Transverse colon (tissue), 4 donors: ENCODE measurements at regions of chr9 and their contacts with region 1.

Region 1: DNA sequence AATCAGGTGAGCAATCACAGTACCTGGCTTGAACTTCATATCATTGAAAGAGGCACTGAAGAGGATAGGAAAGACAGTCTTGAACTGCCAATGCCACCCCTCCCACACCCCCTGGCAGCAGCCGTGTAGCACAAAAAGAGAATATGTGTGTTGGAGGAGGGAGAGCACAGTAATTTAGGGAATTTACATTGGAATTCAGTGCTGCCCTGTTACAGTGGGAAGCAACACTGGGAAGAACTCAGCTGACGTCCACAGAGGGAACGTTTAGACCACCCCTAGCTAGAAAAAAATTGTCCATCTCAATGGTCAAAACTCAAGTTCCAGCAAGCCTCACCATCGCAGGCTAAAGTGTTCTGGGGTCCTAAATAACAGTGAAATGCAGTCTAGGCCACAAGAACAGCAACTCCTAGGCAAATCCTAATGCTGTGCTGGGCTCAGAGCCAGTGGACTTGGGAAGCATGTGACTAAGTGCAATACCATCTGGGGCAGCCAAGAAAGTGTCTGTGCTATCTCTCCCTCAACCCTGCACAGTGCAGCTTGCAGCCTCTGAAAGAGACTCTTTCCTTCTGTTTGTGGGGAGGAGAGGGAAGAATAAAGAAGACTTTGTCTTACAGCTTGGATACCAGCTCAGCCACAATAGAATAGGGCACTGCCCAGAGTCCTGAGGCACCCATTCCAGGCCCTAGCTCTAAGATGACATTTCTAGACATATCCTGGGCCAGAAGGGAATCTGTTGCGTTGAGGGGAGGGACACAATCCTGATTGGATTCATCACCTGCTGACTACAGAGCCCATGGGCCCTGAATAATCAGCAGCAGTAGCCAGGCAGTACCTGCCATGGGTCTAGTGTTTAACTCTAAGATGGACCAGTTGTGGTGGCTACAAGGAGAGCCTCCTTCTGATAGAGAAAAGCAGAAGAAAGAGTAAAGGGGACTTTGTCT is 62.1 kb upstream of the VLDLR start:
- DNase-seq: peak; percentile 43
- H3K4me3 ChIP-seq: no peak overlapping the region
- H3K27ac ChIP-seq: peak overlapping the region in 3 of 4 donors; percentile 42 to 57 (median 50)
- H3K4me1 ChIP-seq: peaks cover 8 to 15% (median 11%) of the 10 kb centered on the region in 4 donors
- H3K27me3 ChIP-seq: no peaks in the 10 kb centered on the region
- CTCF ChIP-seq: no peak
- EP300 ChIP-seq: no peak
- POLR2A ChIP-seq: no peak

Region 2: GRCh38 chr9:2502760-2503159 is 56.7 kb before region 1 on chr9:
- in situ Hi-C with region 1: loop called in 1 of 4 experiments (anchors 10 kb)
- intact Hi-C with region 1: no loop called
- DNase-seq: no peak
- H3K4me3 ChIP-seq: no peak overlapping the region
- H3K27ac ChIP-seq: no peak overlapping the region
- H3K4me1 ChIP-seq: no peaks in the 10 kb centered on the region
- H3K27me3 ChIP-seq: no peaks in the 10 kb centered on the region
- CTCF ChIP-seq: no peak
- EP300 ChIP-seq: no peak
- POLR2A ChIP-seq: no peak

Region 3: GRCh38 chr9:2583308-2584013 is 24.0 kb after region 1 on chr9:
- in situ Hi-C with region 1: no loop called
- intact Hi-C with region 1: no loop called
- DNase-seq: peak; percentile 32
- H3K4me3 ChIP-seq: no peak overlapping the region
- H3K27ac ChIP-seq: no peak overlapping the region
- H3K4me1 ChIP-seq: no peaks in the 10 kb centered on the region
- H3K27me3 ChIP-seq: no peaks in the 10 kb centered on the region
- CTCF ChIP-seq: no peak
- EP300 ChIP-seq: no peak
- POLR2A ChIP-seq: no peak